ENCODE measurements at regions of chr17 and their contacts with region 1.

Region 1: DNA sequence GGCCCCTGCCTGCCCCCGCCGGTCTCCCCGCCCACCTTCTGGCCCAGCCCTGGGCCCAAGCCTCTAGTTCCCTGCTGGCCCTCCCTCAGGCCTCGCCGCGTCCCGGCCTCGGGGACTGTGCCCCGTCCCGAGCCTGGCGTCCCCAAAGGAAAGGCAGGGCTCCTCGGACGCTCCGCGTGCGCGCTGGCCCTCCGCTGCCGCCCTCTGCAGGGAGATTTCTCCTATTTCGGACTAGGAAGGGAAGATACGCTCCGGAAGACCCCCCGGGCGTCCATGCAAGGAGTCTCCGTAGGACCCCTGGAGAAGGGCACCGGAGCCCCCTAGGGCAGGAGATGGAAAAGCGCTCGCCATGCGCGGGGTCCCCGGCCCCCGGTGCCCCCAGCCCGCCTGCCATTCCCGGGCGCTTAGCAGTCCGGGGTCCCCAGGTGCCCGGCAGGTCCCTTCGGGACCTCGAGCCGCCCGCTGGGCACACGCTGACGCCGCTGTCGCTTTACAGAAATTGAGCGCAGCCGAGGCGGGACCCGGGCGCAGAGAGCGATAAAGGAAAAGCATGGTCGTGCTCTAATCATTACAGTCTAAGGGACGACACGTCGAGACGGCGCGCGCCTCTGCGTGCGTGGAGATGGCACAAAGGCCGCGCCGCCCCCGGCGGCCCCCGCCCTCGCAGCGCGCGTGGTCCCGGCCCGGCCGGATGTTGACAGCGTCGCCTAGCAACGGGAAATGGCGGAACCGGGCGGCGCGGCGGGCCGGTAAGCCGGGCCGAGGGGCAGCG is at the start of gene CCDC40:
- DNase-seq: peak; percentile 72
- ATAC-seq: peak; percentile 92
- H3K4me3 ChIP-seq: peak within 1 kb of the TSS; percentile 78 to 96 (median 91)
- H3K27ac ChIP-seq: peak within 1 kb of the TSS; percentile 96
- H3K4me1 ChIP-seq: peaks cover 43% of the 10 kb centered on the region
- H3K27me3 ChIP-seq: no peaks in the 10 kb centered on the region; a peak in 1 of 5 replicates
- CTCF ChIP-seq: peak; percentile 39
- EP300 ChIP-seq: peak in 1 of 2 experiments; percentile 52; a peak in 1 of 4 replicates
- POLR2A ChIP-seq: peak; percentile 85 to 91
- RAD21 ChIP-seq: no peak; the same call in none of the 2 replicates
- total RNA-seq, gene CCDC40: 3.8 and 5.5 TPM in 2 replicates

Region 2: GRCh38 chr17:80071116-80071980 is 35.2 kb after region 1 on chr17:
- CTCF ChIA-PET with region 1: no interaction called
- POLR2A ChIA-PET with region 1: no interaction called
- in situ Hi-C with region 1: no loop called
- intact Hi-C with region 1: loop called (anchors 5 kb)
- DNase-seq: peak; percentile 43
- ATAC-seq: peak; percentile 64
- H3K4me3 ChIP-seq: peak overlapping the region; percentile 60 to 72 (median 62)
- H3K27ac ChIP-seq: no peak overlapping the region
- H3K4me1 ChIP-seq: peaks cover 43% of the 10 kb centered on the region
- H3K27me3 ChIP-seq: no peaks in the 10 kb centered on the region; a peak in 1 of 5 replicates
- CTCF ChIP-seq: no peak
- EP300 ChIP-seq: no peak
- POLR2A ChIP-seq: peak; percentile 16 to 33; a peak in 1 of 4 replicates
- RAD21 ChIP-seq: no peak

Region 3: GRCh38 chr17:80364216-80364618 is 328.1 kb after region 1 on chr17:
- CTCF ChIA-PET with region 1: no interaction called
- POLR2A ChIA-PET with region 1: no interaction called
- in situ Hi-C with region 1: no loop called
- intact Hi-C with region 1: no loop called
- DNase-seq: peak; percentile 20
- ATAC-seq: peak; percentile 68
- H3K4me3 ChIP-seq: no peak overlapping the region
- H3K27ac ChIP-seq: no peak overlapping the region
- H3K4me1 ChIP-seq: no peaks in the 10 kb centered on the region
- H3K27me3 ChIP-seq: no peaks in the 10 kb centered on the region
- CTCF ChIP-seq: peak; percentile 83
- EP300 ChIP-seq: no peak
- POLR2A ChIP-seq: no peak
- RAD21 ChIP-seq: peak; percentile 77

Measured in HepG2 (cell line).